ENCODE measurements at regions of chr5 and their contacts with region 1.

Region 1: GRCh38 chr5:138128334-138128733 is 10.9 kb downstream of the NME5 start:
- DNase-seq: no peak
- H3K4me3 Mint-ChIP-seq: no peak overlapping the region
- H3K27ac Mint-ChIP-seq: no peak overlapping the region
- H3K4me1 Mint-ChIP-seq: peaks cover under 1% of the 10 kb centered on the region
- H3K27me3 Mint-ChIP-seq: peaks cover 16% of the 10 kb centered on the region

Region 2: DNA sequence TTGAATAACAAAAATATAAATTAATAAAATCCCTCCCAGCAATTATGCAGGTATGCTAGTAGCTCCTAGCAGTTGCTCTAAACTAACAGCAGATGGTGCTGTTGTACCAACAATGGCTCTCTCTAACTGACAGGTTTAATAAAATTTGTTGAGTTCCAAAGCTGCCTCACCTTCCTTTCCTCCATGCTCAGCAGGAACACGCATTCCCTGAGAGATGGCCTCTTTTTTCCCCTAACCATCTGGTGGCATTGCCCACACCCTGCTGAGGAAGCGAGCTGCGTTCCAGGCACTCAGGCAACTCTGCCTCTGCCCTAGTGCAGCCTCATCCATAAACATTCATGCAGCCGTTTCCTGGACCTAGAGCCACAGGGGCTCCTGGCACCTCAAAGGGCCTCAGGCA is 498.7 kb before region 1 on chr5:
- intact Hi-C with region 1: loop called (anchors 1 kb)
- DNase-seq: no peak
- H3K4me3 Mint-ChIP-seq: no peak overlapping the region
- H3K27ac Mint-ChIP-seq: no peak overlapping the region
- H3K4me1 Mint-ChIP-seq: no peaks in the 10 kb centered on the region
- H3K27me3 Mint-ChIP-seq: no peaks in the 10 kb centered on the region

Region 3: GRCh38 chr5:137660349-137660817 is 468.0 kb before region 1 on chr5:
- intact Hi-C with region 1: loop called (anchors 1 kb)
- DNase-seq: peak; percentile 50
- H3K4me3 Mint-ChIP-seq: no peak overlapping the region
- H3K27ac Mint-ChIP-seq: no peak overlapping the region
- H3K4me1 Mint-ChIP-seq: peaks cover 3% of the 10 kb centered on the region
- H3K27me3 Mint-ChIP-seq: no peaks in the 10 kb centered on the region

Region 4: GRCh38 chr5:137778772-137779564 is 349.4 kb before region 1 on chr5:
- intact Hi-C with region 1: loop called (anchors 1 kb)
- DNase-seq: no peak
- H3K4me3 Mint-ChIP-seq: no peak overlapping the region
- H3K27ac Mint-ChIP-seq: no peak overlapping the region
- H3K4me1 Mint-ChIP-seq: no peaks in the 10 kb centered on the region
- H3K27me3 Mint-ChIP-seq: peaks cover 8% of the 10 kb centered on the region

Region 5: DNA sequence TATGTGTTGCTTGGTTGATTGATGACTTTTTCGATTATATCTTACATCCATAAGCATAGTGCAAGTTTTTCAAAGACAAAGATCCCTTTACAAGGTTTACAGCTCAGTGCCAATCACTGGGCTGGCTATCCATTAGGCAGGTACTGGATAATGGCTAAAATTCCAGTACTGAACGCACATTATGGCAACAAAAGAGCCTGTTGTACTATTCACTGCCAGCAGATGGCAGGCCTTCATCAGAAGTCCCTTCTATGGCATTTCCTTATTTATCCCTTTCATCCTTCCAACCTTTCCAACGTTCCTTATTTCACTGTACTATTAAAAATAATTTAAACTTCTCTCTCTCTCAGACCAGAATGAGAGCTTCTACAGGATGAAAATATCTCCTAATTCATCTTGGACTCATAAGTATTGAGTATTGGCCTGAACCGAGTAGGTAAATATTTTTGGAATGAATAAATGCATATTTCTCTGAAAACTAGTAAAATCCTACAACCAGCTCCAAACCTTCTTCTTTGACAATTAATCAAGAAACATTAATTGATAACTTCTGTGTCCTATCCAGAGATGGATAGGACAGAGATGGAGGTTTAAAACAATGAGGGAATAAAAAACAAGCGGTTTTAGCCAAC is 51.2 kb before region 1 on chr5:
- intact Hi-C with region 1: loop called (anchors 1 kb)
- DNase-seq: no peak
- H3K4me3 Mint-ChIP-seq: no peak overlapping the region
- H3K27ac Mint-ChIP-seq: no peak overlapping the region
- H3K4me1 Mint-ChIP-seq: peaks cover 13% of the 10 kb centered on the region
- H3K27me3 Mint-ChIP-seq: peaks cover 4% of the 10 kb centered on the region

Region 6: GRCh38 chr5:138159666-138160065 is 31.3 kb after region 1 on chr5:
- intact Hi-C with region 1: no loop called
- DNase-seq: no peak
- H3K4me3 Mint-ChIP-seq: no peak overlapping the region
- H3K27ac Mint-ChIP-seq: no peak overlapping the region
- H3K4me1 Mint-ChIP-seq: no peaks in the 10 kb centered on the region
- H3K27me3 Mint-ChIP-seq: no peaks in the 10 kb centered on the region

Region 7: DNA sequence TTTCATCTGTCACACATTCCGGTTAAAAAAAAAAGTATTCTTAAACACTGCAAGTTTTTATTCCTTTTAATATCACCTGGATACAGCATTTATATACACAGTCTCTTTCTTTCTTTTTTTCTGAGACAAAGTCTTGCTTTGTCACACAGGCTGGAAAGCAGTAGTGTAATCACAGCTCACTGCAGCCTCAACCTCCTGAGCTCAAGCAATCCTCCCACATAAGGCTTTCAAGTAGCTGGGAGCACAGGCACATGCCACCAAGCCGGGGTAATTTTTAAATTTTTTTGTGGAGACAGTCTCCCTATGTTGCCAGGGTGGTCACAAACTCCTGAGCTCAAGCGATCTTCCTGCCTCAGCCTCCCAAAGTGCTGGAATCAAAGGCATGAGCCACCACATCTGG is 64.5 kb after region 1 on chr5:
- intact Hi-C with region 1: no loop called
- DNase-seq: no peak
- H3K4me3 Mint-ChIP-seq: no peak overlapping the region
- H3K27ac Mint-ChIP-seq: no peak overlapping the region
- H3K4me1 Mint-ChIP-seq: no peaks in the 10 kb centered on the region
- H3K27me3 Mint-ChIP-seq: no peaks in the 10 kb centered on the region

Region 8: DNA sequence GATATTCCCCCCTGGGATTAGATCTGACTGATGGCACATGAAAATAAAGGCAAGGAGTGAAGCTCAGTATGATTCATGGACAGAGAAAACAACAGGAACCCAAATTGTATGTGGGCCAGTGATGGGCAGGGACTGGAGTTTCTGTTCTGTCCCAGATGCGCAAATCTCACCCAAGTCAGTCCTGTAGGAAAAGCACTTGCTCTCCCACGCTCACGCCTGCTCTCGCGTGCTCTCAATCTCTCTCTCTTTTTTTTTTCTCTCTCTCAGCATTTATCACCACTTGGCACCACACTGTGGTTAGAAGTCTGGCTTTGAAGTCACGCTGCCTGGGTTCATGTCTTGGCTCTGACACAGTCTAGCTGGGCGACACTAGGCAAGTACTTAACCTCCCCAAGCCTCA is 853.3 kb after region 1 on chr5:
- intact Hi-C with region 1: no loop called
- DNase-seq: no peak
- H3K4me3 Mint-ChIP-seq: no peak overlapping the region
- H3K27ac Mint-ChIP-seq: peak overlapping the region; percentile 69
- H3K4me1 Mint-ChIP-seq: peaks cover 29% of the 10 kb centered on the region
- H3K27me3 Mint-ChIP-seq: peaks cover 2% of the 10 kb centered on the region

Measured in activated T-helper 1 cell treated with anti-CD3 and anti-CD28 coated beads, Interleukin-12 subunit alpha, Interleukin-12 subunit beta, Interleukin-2, Interleukin-4 antibody, amounts not matched to agents 30 ng/mL and 10 ng/mL and 1 ng/mL, durations not matched to agents 14 hours and 24 hours and 36 hours (primary cell).